MCF 10A (cell line): ENCODE measurements at regions of chr1 and their contacts with region 1.

Region 1: DNA sequence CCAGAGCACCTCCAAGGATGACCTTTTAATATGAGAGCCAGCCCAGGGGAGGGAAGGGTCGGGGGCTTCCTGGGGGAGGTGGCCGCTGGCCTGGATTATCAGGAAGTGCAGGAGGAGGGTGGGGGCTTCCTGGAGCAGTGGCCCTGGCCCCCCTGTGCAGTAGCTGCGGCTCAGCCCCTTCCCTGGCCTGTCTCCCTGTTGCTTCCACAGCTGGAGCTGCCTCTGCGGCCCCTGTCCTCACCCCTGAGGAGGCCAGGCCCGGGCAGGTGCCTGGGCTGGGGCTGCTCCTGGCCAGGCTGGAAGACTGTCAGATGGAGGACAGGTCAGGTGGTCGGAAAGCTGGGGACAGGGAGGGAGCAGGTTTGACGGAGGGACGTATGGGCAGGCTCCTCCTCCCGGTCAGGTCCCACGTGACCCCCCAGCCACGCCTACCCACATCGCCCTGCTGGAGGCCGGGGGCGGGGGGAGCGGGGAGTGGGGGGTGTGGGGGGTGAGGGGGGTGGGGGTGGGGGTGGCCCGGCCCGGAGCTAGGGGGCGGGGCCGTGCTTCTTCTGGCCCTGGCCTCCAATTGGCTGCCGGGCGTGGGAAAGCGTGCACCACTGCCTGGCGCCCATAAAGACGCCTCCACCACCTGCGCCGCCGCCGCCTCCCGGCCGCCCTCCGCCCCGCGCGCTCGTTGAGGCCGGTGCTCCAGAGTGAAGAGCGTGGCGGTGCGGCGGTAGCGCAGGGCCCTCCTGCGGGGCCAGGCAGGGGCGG is 10.2 kb upstream of the TNFRSF14 start:
- DNase-seq: peak; percentile 78
- H3K4me3 Mint-ChIP-seq: peak overlapping the region; percentile 75
- H3K27ac Mint-ChIP-seq: no peak overlapping the region
- H3K4me1 Mint-ChIP-seq: peaks cover 5% of the 10 kb centered on the region
- H3K27me3 Mint-ChIP-seq: no peaks in the 10 kb centered on the region
- CTCF ChIP-seq: no peak

Region 2: GRCh38 chr1:2151252-2151651 is 394.7 kb before region 1 on chr1:
- CTCF ChIA-PET with region 1: no interaction called
- POLR2A ChIA-PET with region 1: no interaction called
- intact Hi-C with region 1: no loop called
- DNase-seq: peak; percentile 25
- H3K4me3 Mint-ChIP-seq: no peak overlapping the region
- H3K27ac Mint-ChIP-seq: no peak overlapping the region
- H3K4me1 Mint-ChIP-seq: no peaks in the 10 kb centered on the region
- H3K27me3 Mint-ChIP-seq: no peaks in the 10 kb centered on the region
- CTCF ChIP-seq: no peak

Region 3: DNA sequence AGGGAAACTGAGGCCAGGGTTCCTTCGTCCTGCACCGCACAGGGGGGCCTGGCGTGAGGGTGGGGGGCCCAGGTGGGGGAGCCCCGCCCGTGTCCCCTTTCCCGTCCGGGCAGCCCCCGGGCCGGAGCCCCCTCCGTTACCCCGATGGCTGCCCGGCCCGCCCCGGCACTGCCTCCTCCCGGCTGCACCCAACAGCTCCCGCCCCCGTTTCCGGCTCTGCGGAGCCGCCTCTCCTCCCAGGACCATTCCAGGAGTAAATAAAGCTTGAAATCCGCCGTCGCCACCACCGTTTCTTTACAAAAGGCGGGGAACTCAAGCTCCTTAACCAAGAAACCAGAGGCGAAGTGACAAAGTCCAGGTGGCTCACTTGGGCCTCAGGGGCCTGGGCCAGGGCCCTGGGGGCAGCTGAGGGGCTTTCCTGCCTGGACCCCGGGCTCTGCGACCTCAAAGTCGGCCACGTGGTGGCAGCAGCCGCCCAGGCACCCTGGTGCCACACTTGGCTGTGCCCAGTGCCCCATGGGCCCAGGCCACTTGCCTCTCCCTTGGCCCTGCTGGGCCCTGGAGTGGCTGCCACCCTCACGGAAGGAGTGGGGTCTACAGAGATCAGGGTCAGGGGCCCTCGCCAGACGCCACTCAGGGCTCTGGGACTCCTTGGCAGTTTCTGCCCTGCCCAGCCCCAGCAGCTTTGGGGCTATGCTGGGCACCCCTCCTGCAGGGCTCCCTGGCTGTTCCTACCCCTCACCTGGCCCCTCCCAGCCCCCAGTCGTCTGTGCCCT is 350.9 kb before region 1 on chr1:
- CTCF ChIA-PET with region 1: interaction called, 3 read pairs
- POLR2A ChIA-PET with region 1: interaction called, 3 read pairs
- intact Hi-C with region 1: loop called (anchors 5 kb)
- DNase-seq: peak; percentile 87
- H3K4me3 Mint-ChIP-seq: peak overlapping the region; percentile 71
- H3K27ac Mint-ChIP-seq: no peak overlapping the region
- H3K4me1 Mint-ChIP-seq: peaks cover 18% of the 10 kb centered on the region
- H3K27me3 Mint-ChIP-seq: no peaks in the 10 kb centered on the region
- CTCF ChIP-seq: peak; percentile 96

Region 4: GRCh38 chr1:2399890-2400575 is 145.9 kb before region 1 on chr1:
- CTCF ChIA-PET with region 1: no interaction called
- POLR2A ChIA-PET with region 1: no interaction called
- intact Hi-C with region 1: no loop called
- DNase-seq: no peak
- H3K4me3 Mint-ChIP-seq: no peak overlapping the region
- H3K27ac Mint-ChIP-seq: no peak overlapping the region
- H3K4me1 Mint-ChIP-seq: no peaks in the 10 kb centered on the region
- H3K27me3 Mint-ChIP-seq: no peaks in the 10 kb centered on the region
- CTCF ChIP-seq: no peak

Region 5: DNA sequence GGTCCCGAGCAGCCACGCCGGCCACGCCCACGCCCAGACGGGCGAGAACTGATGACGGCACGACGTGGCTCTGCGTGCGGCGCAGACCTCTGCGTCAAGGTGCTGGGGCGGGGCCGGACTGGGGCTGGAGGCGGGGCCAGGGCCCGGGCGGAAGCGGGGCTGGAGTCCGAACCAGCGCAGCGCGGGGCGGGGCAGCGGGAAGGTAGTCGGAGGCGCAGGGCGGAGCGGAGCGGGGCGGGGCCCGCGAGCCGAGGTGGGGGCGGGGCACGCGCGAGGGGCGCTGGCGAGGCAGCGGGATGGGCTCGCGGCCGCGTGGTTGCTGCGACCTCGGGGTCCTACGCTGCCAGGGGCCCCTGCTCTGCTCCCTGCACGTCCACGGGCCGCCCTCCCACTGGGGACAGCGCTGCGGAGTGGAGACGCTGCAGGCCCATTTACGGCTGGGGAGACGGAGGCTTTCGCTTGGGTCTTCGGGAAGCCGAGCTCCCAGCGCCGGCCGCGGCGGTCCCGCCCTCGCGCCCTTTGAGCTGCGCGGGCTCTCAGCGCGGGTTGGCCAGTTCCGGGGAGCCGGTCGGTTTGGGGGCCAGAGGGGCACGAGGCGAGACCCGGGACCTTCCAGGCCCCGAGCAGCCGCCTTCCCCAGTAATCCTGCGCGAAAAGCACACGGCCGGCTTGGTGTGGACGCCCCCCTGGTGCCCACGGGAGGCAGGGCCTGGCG is 133.3 kb before region 1 on chr1 and contains the start of gene PEX10:
- CTCF ChIA-PET with region 1: interaction called, 60 read pairs
- POLR2A ChIA-PET with region 1: interaction called, 22 read pairs
- intact Hi-C with region 1: loop called (anchors 1 kb)
- DNase-seq: peak; percentile 94
- H3K4me3 Mint-ChIP-seq: peak within 1 kb of the TSS; percentile 75
- H3K27ac Mint-ChIP-seq: peak within 1 kb of the TSS; percentile 87
- H3K4me1 Mint-ChIP-seq: peaks cover 8% of the 10 kb centered on the region
- H3K27me3 Mint-ChIP-seq: no peaks in the 10 kb centered on the region
- CTCF ChIP-seq: no peak
- total RNA-seq, gene PEX10: 31.3 and 36.1 TPM in 2 replicates

Region 6: GRCh38 chr1:2429780-2430591 is 116.0 kb before region 1 on chr1:
- CTCF ChIA-PET with region 1: interaction called, 21 read pairs
- POLR2A ChIA-PET with region 1: no interaction called
- intact Hi-C with region 1: no loop called
- DNase-seq: no peak
- H3K4me3 Mint-ChIP-seq: peak overlapping the region; percentile 77
- H3K27ac Mint-ChIP-seq: no peak overlapping the region
- H3K4me1 Mint-ChIP-seq: no peaks in the 10 kb centered on the region
- H3K27me3 Mint-ChIP-seq: no peaks in the 10 kb centered on the region
- CTCF ChIP-seq: peak; percentile 47

Region 7: GRCh38 chr1:2519029-2519685 is 26.8 kb before region 1 on chr1:
- CTCF ChIA-PET with region 1: interaction called, 13 read pairs
- POLR2A ChIA-PET with region 1: interaction called, 36 read pairs
- intact Hi-C with region 1: no loop called
- DNase-seq: no peak
- H3K4me3 Mint-ChIP-seq: no peak overlapping the region
- H3K27ac Mint-ChIP-seq: no peak overlapping the region
- H3K4me1 Mint-ChIP-seq: peaks cover 4% of the 10 kb centered on the region
- H3K27me3 Mint-ChIP-seq: no peaks in the 10 kb centered on the region
- CTCF ChIP-seq: no peak

Region 8: DNA sequence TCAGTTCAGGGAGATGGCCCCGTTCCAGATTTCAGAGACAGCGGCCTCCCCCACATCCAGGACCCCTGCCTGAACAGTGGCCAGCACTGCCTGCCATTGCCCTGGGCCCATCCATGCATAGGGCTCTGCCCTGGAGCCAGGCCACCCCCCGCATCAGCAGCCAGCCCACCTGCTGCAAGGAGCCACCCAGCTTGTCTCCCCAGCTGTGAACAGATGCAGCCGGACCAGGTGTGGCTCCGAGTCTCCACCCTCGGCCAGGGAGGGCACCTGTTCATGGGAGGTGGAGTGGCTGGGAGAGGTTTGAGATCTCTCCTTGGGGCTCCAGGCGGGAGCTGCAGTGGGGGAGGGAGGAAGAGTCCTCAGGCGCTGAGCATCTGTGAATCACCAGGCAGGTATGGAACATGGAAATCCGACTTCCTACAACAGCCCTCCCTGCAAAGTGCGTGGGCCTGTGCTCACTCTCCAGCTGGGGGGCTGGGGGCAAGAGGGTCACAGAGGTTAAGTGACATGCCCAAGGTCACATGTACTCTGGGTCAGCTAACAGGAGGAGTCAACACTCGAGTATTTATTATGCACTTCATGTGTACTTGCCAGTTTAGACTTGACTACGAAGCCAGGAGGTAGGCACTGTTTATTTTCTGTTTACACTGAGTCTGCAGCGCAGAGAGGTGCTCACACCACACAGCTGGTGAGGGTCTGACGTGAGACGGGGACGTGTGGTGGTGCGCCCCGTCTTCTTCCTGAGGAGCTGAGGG is 11.1 kb before region 1 on chr1:
- CTCF ChIA-PET with region 1: interaction called, 28 read pairs
- POLR2A ChIA-PET with region 1: interaction called, 17 read pairs
- intact Hi-C with region 1: loop called (anchors 1 kb)
- DNase-seq: peak; percentile 86
- H3K4me3 Mint-ChIP-seq: peak overlapping the region; percentile 41
- H3K27ac Mint-ChIP-seq: peak overlapping the region; percentile 59
- H3K4me1 Mint-ChIP-seq: peaks cover 48% of the 10 kb centered on the region
- H3K27me3 Mint-ChIP-seq: no peaks in the 10 kb centered on the region
- CTCF ChIP-seq: no peak

Region 9: DNA sequence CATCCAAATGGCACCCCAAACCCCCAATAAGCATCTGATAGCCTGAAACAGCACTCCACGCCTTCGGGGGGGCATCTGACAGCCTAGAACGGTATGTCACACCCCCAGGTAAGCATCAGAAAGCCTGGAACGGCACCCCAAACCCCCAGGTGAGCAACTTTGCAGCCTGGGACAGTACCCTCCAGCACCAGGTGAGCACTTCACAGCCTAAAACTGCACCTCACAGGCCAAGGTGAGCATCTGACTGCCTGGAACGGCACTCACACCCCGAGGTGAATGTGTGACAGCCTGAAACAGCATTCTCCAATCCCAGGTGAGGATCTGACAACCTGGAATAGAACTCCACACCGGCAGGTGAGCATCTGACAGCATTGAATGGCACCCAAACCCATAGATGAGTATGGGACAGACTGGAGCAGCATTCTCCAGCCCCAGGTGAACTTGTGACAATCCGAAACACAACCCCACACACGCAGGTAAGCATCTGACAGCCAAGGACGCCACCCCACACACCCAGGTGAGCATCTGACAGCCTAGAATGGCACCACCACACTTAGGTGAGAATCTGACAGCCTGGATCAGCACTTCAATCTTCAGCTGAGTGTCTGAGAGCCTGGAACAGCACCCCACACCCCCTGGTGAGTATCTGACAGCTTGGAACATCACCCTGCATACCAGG is 105.2 kb after region 1 on chr1:
- CTCF ChIA-PET with region 1: no interaction called
- POLR2A ChIA-PET with region 1: no interaction called
- intact Hi-C with region 1: no loop called
- DNase-seq: no peak
- H3K4me3 Mint-ChIP-seq: no peak overlapping the region
- H3K27ac Mint-ChIP-seq: no peak overlapping the region
- H3K4me1 Mint-ChIP-seq: no peaks in the 10 kb centered on the region
- H3K27me3 Mint-ChIP-seq: no peaks in the 10 kb centered on the region
- CTCF ChIP-seq: no peak